ENCODE measurements at regions of chr4 and their contacts with region 1.

Region 1: DNA sequence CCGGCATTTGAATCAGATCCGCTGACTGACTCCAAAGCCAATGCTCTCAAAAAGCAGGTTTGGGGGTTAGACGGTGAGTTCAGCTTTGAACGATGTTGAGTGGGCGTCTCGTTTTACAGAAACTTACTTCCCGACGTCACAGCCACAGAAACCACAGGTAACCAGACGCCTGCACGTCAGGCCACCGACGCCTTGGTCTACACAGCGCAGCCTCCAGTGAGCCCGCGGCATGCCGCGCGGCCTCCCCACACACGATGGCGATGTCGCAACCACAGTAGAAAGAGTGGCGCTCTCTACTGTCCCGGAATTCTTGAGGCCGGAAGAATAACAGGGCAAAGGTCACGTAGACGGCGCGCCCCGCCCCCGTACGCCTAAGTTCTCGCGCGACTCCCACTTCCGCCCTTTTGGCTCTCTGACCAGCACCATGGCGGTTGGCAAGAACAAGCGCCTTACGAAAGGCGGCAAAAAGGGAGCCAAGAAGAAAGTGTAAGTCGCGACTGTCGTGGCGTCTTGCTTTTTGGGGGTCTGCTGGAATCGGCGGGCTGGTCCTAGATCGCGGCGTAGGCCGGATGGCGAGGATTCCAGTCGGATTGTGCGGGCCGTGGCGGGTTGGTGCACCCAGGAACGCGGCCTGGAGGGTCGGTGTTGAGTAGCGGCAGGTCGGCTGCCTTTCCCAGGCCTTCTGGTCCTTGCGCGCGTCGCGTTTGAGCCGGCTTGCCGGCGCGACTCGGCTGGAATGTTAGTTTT is at the start of gene RPS3A:
- DNase-seq: peak; percentile 97
- H3K4me3 ChIP-seq: peak within 1 kb of the TSS; percentile 100
- H3K27ac ChIP-seq: peak within 1 kb of the TSS; percentile 67
- H3K4me1 ChIP-seq: peaks cover 27% of the 10 kb centered on the region
- CTCF ChIP-seq: peak; percentile 83
- total RNA-seq, gene RPS3A: 2,852 and 3,051 TPM in 2 replicates

Region 2: GRCh38 chr4:150525332-150525868 is 574.0 kb before region 1 on chr4:
- CTCF ChIA-PET with region 1: no interaction called
- POLR2A ChIA-PET with region 1: no interaction called
- intact Hi-C with region 1: no loop called
- DNase-seq: no peak
- H3K4me3 ChIP-seq: no peak overlapping the region
- H3K27ac ChIP-seq: no peak overlapping the region
- H3K4me1 ChIP-seq: no peaks in the 10 kb centered on the region
- CTCF ChIP-seq: no peak

Region 3: GRCh38 chr4:151015459-151016347 is 83.7 kb before region 1 on chr4:
- CTCF ChIA-PET with region 1: no interaction called
- POLR2A ChIA-PET with region 1: interaction called, 5 read pairs
- intact Hi-C with region 1: loop called (anchors 2 kb)
- DNase-seq: peak; percentile 90
- H3K4me3 ChIP-seq: peak overlapping the region; percentile 95
- H3K27ac ChIP-seq: peak overlapping the region; percentile 88
- H3K4me1 ChIP-seq: peaks cover 18% of the 10 kb centered on the region
- CTCF ChIP-seq: no peak

Region 4: GRCh38 chr4:151407466-151408379 is 308.3 kb after region 1 on chr4:
- CTCF ChIA-PET with region 1: no interaction called
- POLR2A ChIA-PET with region 1: no interaction called
- intact Hi-C with region 1: no loop called
- DNase-seq: no peak
- H3K4me3 ChIP-seq: peak overlapping the region; percentile 61
- H3K27ac ChIP-seq: no peak overlapping the region
- H3K4me1 ChIP-seq: no peaks in the 10 kb centered on the region
- CTCF ChIP-seq: no peak

Region 5: GRCh38 chr4:151658959-151659600 is 559.7 kb after region 1 on chr4:
- CTCF ChIA-PET with region 1: no interaction called
- POLR2A ChIA-PET with region 1: no interaction called
- intact Hi-C with region 1: no loop called
- DNase-seq: peak; percentile 44
- H3K4me3 ChIP-seq: no peak overlapping the region
- H3K27ac ChIP-seq: no peak overlapping the region
- H3K4me1 ChIP-seq: peaks cover 10% of the 10 kb centered on the region
- CTCF ChIP-seq: no peak

Region 6: GRCh38 chr4:151760712-151761527 is 661.5 kb after region 1 on chr4 and contains the start of gene GATB:
- CTCF ChIA-PET with region 1: no interaction called
- POLR2A ChIA-PET with region 1: no interaction called
- intact Hi-C with region 1: loop called (anchors 2 kb)
- DNase-seq: peak; percentile 97
- H3K4me3 ChIP-seq: peak within 1 kb of the TSS; percentile 84
- H3K27ac ChIP-seq: peak within 1 kb of the TSS; percentile 31
- H3K4me1 ChIP-seq: peaks cover 15% of the 10 kb centered on the region
- CTCF ChIP-seq: peak; percentile 70
- total RNA-seq, gene GATB: 24.6 and 25.2 TPM in 2 replicates